Left cardiac atrium (tissue), 4 donors: ENCODE measurements at regions of chr12 and their contacts with region 1.

Region 1: GRCh38 chr12:43728117-43728516 is 30.5 kb downstream of the PUS7L start:
- DNase-seq: no peak
- ATAC-seq: no peak

Region 2: GRCh38 chr12:43444940-43445564 is 283.1 kb before region 1 on chr12:
- intact Hi-C with region 1: loop called in 1 of 2 experiments (anchors 5 kb)
- DNase-seq: peak; percentile 28
- ATAC-seq: no peak

Region 3: DNA sequence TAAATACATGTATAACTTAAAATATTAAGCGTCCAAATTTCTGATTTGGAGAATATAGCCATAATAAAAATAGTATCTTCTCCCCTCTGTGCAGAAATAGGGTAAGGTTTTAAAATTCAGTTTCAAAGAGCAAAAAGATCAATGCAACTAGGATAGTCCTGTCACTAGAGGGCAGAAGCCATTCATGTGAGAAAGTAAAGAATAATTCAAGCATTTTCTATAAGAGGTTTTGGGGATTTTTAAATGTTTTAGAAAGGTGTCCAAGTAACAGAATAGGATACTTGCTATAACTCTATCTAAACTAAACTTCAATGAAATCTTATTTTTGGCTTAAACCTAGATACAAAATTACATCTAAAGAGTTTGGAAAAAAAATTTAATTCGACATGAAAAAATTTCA is 226.4 kb before region 1 on chr12:
- intact Hi-C with region 1: loop called in 1 of 2 experiments (anchors 5 kb)
- DNase-seq: no peak
- ATAC-seq: no peak